Aorta (tissue), 5 donors: ENCODE measurements at regions of chr6 and their contacts with region 1.

Region 1: GRCh38 chr6:44172731-44173500 is 14.3 kb downstream of the CAPN11 start:
- DNase-seq: peak; percentile 91 to 95
- ATAC-seq: peak; percentile 92
- H3K4me3 ChIP-seq: no peak overlapping the region
- H3K27ac ChIP-seq: no peak overlapping the region
- H3K4me1 ChIP-seq: no peaks in the 10 kb centered on the region
- H3K27me3 ChIP-seq: no peaks in the 10 kb centered on the region

Region 2: GRCh38 chr6:44221291-44221960 is 48.5 kb after region 1 on chr6:
- intact Hi-C with region 1: loop called in 1 of 2 experiments (anchors 5 kb)
- DNase-seq: peak; percentile 96 to 97
- ATAC-seq: peak; percentile 83
- H3K4me3 ChIP-seq: no peak overlapping the region
- H3K27ac ChIP-seq: peak overlapping the region; percentile 51 to 84
- H3K4me1 ChIP-seq: no peaks in the 10 kb centered on the region
- H3K27me3 ChIP-seq: no peaks in the 10 kb centered on the region

Region 3: DNA sequence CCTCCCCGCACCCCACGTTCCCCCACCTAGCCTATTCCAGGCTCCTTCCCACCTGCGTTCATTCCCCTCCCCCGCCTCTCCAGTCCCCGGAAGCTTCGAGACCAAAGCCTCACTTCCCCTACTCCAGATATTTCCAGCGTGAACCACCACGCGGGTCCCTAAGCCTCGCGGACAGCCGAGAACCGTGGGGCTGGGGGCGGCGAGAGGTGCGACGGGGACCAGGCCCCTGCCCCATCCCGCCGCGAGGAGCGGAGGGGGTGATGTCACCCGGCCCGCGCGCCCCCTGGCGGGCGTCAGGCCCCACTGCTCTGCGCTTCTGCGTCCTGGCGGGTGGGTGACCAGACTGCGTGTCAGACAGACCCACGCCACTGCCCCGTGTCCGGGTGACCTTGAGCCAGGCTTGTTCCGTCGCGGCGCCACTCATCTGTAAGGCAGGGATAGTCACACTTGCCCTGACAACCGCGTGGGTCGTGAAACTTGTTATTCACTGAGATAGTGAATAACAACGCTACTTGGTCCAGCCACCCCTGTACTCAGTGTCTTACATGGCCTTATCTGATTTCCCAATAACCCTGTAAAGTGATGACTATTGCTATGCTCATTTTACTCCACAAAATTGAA is 65.0 kb after region 1 on chr6:
- intact Hi-C with region 1: loop called (anchors 1 to 2 kb)
- DNase-seq: peak; percentile 90 to 95
- ATAC-seq: peak; percentile 94
- H3K4me3 ChIP-seq: peak overlapping the region; percentile 21 to 35
- H3K27ac ChIP-seq: peak overlapping the region; percentile 84 to 95
- H3K4me1 ChIP-seq: no peaks in the 10 kb centered on the region
- H3K27me3 ChIP-seq: no peaks in the 10 kb centered on the region

Region 4: GRCh38 chr6:44257025-44257752 is 84.3 kb after region 1 on chr6 and contains the start of gene SLC35B2:
- intact Hi-C with region 1: loop called in 1 of 2 experiments (anchors 5 kb)
- DNase-seq: peak; percentile 76 to 88
- ATAC-seq: peak; percentile 89
- H3K4me3 ChIP-seq: peak within 1 kb of the TSS; percentile 81 to 87
- H3K27ac ChIP-seq: peak within 1 kb of the TSS in 1 of 2 donors; percentile 48
- H3K4me1 ChIP-seq: peaks cover 0 to 2% of the 10 kb centered on the region in 2 donors
- H3K27me3 ChIP-seq: no peaks in the 10 kb centered on the region
- total RNA-seq, gene SLC35B2: 23.4 to 26.0 TPM

Region 5: DNA sequence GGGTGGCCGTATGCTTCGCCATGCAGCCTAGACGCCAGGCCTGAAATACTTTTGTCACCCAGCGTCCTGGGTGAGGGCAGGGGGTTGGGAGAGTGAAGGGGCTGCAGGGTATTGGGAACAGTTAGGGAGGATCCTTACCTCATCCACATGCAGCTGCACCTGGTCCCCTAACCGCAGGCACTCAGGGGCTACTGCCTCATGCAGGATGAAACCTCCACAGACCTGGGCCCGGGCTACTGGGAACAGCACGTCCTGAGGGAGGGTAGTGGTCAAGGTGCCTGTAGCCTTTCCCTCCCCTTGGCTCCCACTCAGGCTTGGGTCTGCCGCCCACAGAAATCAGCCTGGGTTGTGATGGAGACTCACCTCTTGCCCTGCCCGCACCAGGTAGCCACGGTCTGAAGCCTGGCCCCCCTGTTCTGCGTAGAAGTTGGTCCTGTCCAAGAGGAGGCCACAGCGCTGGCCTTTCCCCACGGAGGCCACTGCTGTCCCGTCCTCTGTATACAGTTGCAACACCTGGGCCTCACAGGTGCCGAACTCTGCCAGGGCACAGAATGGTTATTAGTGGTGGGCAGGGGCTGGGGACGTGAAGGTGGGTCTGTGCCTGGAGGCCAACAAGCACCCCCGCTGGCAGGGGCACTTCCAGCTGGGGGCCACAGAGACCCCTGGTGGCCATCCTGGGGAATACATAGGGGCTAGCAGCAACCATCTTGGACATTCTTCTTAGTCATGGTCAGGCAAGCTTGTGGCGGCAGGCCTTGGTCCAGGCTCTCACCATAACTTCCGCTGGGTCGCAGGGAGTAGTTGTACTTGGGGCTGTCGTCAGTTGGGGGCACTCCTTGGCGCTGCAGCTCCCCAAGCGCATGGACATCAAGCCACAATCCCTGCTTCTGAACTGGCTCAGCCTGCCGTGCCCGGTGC is 131.6 kb after region 1 on chr6:
- intact Hi-C with region 1: no loop called
- DNase-seq: peak in 1 of 2 donors; percentile 75
- ATAC-seq: no peak
- H3K4me3 ChIP-seq: no peak overlapping the region
- H3K27ac ChIP-seq: no peak overlapping the region
- H3K4me1 ChIP-seq: no peaks in the 10 kb centered on the region
- H3K27me3 ChIP-seq: no peaks in the 10 kb centered on the region